ENCODE measurements at regions of chr14 and their contacts with region 1.

Region 1: DNA sequence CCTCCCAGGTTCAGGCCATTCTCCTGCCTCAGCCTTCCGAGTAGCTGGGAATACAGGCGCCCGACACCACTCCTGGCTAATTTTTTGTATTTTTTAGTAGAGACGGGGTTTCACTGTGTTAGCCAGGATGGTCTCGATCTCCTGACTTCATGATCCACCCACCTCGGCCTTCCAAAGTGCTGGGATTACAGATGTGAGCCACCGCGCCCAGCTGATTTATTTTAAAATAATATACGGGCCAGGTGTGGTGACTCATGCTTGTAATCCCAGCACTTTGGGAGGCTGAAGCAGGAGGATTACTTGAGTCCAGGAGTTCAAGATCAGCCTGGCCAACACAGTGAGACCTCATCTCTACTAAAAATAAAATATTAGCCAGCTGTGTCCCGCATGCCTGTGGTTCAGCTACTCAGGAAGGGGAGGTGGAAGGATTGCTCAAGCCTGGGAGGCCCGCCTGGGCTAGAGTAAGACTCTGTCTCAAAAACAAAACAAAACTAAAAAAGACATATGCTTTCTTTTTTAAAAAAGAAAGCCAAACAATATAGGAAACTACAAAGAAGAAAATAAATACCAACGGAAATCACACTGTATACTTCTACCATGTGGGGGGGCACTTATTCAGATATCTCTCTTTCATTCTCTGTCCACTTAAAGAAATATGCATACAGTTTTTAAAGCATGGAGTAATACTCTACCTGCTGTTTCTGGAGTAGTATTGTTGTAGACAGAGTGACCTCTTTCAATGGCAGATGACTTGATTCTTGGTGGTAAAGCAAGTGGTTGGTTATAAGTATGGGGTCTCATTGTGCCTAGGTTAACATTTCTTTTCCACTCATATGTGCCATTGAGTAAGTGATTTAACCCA is 930 bp upstream of the MIA2 start:
- DNase-seq: peak in 1 of 2 experiments; percentile 38
- H3K4me3 ChIP-seq: no peak overlapping the region
- H3K4me3 Mint-ChIP-seq: no peak overlapping the region
- H3K27ac Mint-ChIP-seq: peak overlapping the region; percentile 64
- H3K4me1 ChIP-seq: peaks cover 38% of the 10 kb centered on the region
- H3K4me1 Mint-ChIP-seq: peaks cover 5% of the 10 kb centered on the region
- H3K27me3 ChIP-seq: no peaks in the 10 kb centered on the region
- H3K27me3 Mint-ChIP-seq: no peaks in the 10 kb centered on the region
- CTCF ChIP-seq: no peak

Region 2: GRCh38 chr14:39174560-39175444 is 58.0 kb before region 1 on chr14 and contains the start of gene PNN:
- CTCF ChIA-PET with region 1: interaction called, 3 read pairs
- POLR2A ChIA-PET with region 1: interaction called, 4 read pairs
- intact Hi-C with region 1: loop called (anchors 1 kb)
- DNase-seq: peak; percentile 98 to 99
- H3K4me3 ChIP-seq: peak within 1 kb of the TSS; percentile 58
- H3K4me3 Mint-ChIP-seq: peak within 1 kb of the TSS; percentile 92
- H3K27ac Mint-ChIP-seq: peak within 1 kb of the TSS; percentile 98
- H3K4me1 ChIP-seq: 0 out of 2 replicates have a peak, but pooled peaks cover 8% of the 10 kb centered on the region
- H3K4me1 Mint-ChIP-seq: peaks cover 7% of the 10 kb centered on the region
- H3K27me3 ChIP-seq: no peaks in the 10 kb centered on the region
- H3K27me3 Mint-ChIP-seq: no peaks in the 10 kb centered on the region
- CTCF ChIP-seq: no peak
- total RNA-seq, gene PNN: 98.5 and 100 TPM in 2 replicates

Region 3: GRCh38 chr14:39243822-39244221 is 11.0 kb after region 1 on chr14:
- CTCF ChIA-PET with region 1: interaction called, 7 read pairs
- POLR2A ChIA-PET with region 1: no interaction called
- intact Hi-C with region 1: loop called (anchors 1 kb)
- DNase-seq: peak in 1 of 2 experiments; percentile 43
- H3K4me3 ChIP-seq: no peak overlapping the region
- H3K4me3 Mint-ChIP-seq: no peak overlapping the region
- H3K27ac Mint-ChIP-seq: no peak overlapping the region
- H3K4me1 ChIP-seq: peaks cover 10% of the 10 kb centered on the region; the same call in 1 of the 2 replicates
- H3K4me1 Mint-ChIP-seq: peaks cover 7% of the 10 kb centered on the region
- H3K27me3 ChIP-seq: no peaks in the 10 kb centered on the region
- H3K27me3 Mint-ChIP-seq: no peaks in the 10 kb centered on the region
- CTCF ChIP-seq: no peak

Region 4: DNA sequence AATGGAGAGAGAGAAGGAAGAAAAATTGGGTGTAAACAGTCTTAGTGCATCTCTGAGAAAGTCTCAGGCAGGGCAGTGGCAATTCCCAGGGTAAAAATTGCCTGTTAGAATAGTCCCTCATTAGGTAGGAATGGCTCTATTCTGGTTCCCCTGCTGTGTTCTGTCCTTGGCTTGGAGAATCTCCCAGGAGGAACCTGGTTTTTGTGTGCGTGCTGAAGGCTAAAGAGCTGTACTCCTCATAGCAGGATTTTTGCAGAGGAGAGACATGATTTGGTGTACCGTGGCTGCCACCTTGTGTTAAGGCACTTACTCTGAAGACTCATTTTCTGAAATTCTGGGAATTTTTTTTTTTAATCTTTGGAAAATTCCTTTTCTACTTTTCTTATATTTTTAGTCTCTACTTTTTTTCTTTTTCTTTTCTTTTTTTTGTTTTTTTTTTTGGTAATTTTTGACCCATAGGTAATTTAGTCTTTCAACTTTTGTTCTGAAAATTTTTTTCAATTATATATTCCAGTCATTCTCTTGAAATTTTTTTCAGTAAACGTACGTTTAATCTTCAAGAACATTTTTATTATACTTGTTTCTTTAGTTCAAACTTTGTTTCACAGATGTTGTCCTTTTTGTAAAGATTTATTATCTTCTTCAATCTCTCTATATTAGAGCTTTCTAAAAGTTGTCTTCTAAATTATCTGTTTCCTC is 135.6 kb after region 1 on chr14:
- CTCF ChIA-PET with region 1: interaction called, 10 read pairs
- POLR2A ChIA-PET with region 1: no interaction called
- intact Hi-C with region 1: loop called (anchors 1 kb)
- DNase-seq: peak; percentile 69 to 80
- H3K4me3 ChIP-seq: no peak overlapping the region
- H3K4me3 Mint-ChIP-seq: no peak overlapping the region
- H3K27ac Mint-ChIP-seq: no peak overlapping the region
- H3K4me1 ChIP-seq: no peaks in the 10 kb centered on the region
- H3K4me1 Mint-ChIP-seq: peaks cover 11% of the 10 kb centered on the region
- H3K27me3 ChIP-seq: no peaks in the 10 kb centered on the region
- H3K27me3 Mint-ChIP-seq: no peaks in the 10 kb centered on the region
- CTCF ChIP-seq: peak; percentile 69 to 71

Region 5: GRCh38 chr14:39383026-39383660 is 150.4 kb after region 1 on chr14:
- CTCF ChIA-PET with region 1: no interaction called
- POLR2A ChIA-PET with region 1: no interaction called
- intact Hi-C with region 1: no loop called
- DNase-seq: no peak
- H3K4me3 ChIP-seq: no peak overlapping the region
- H3K4me3 Mint-ChIP-seq: no peak overlapping the region
- H3K27ac Mint-ChIP-seq: no peak overlapping the region
- H3K4me1 ChIP-seq: no peaks in the 10 kb centered on the region
- H3K4me1 Mint-ChIP-seq: no peaks in the 10 kb centered on the region
- H3K27me3 ChIP-seq: no peaks in the 10 kb centered on the region
- H3K27me3 Mint-ChIP-seq: no peaks in the 10 kb centered on the region
- CTCF ChIP-seq: no peak

Region 6: DNA sequence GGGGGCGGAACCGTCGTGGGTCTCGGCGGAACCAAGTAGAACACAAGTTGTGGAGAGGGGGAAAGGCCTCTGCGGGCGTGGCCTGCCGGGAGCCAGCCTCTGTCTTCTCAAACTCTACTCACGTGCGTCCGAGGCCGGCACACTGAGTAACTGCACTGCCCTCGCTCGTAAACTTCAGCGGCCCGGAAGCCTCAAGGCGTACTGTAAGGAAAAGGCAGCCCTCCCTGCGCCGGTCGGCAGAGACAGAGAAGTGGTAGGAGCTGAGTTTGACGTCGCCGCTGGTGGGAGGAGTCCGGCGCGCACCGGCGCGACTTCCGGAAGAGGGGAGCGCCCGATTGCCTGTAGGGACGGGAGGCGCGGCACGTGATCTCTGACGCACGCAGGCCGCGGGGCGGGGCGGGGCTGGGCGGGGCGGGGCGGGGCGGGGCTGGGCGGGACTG is 199.4 kb after region 1 on chr14 and contains the start of gene FBXO33:
- CTCF ChIA-PET with region 1: interaction called, 11 read pairs
- POLR2A ChIA-PET with region 1: interaction called, 4 read pairs
- intact Hi-C with region 1: no loop called
- DNase-seq: peak; percentile 96 to 97
- H3K4me3 ChIP-seq: peak within 1 kb of the TSS; percentile 93
- H3K4me3 Mint-ChIP-seq: peak within 1 kb of the TSS; percentile 93
- H3K27ac Mint-ChIP-seq: peak within 1 kb of the TSS; percentile 100
- H3K4me1 ChIP-seq: peaks cover 12% of the 10 kb centered on the region
- H3K4me1 Mint-ChIP-seq: peaks cover 19% of the 10 kb centered on the region
- H3K27me3 ChIP-seq: no peaks in the 10 kb centered on the region
- H3K27me3 Mint-ChIP-seq: no peaks in the 10 kb centered on the region
- CTCF ChIP-seq: no peak
- total RNA-seq, gene FBXO33: 6.0 and 6.5 TPM in 2 replicates

Region 7: GRCh38 chr14:40113671-40114070 is 880.9 kb after region 1 on chr14:
- CTCF ChIA-PET with region 1: no interaction called
- POLR2A ChIA-PET with region 1: no interaction called
- intact Hi-C with region 1: no loop called
- DNase-seq: no peak
- H3K4me3 ChIP-seq: no peak overlapping the region
- H3K4me3 Mint-ChIP-seq: no peak overlapping the region
- H3K27ac Mint-ChIP-seq: no peak overlapping the region
- H3K4me1 ChIP-seq: no peaks in the 10 kb centered on the region; the same call in 1 of the 2 replicates
- H3K4me1 Mint-ChIP-seq: peaks cover 10% of the 10 kb centered on the region
- H3K27me3 ChIP-seq: no peaks in the 10 kb centered on the region
- H3K27me3 Mint-ChIP-seq: no peaks in the 10 kb centered on the region
- CTCF ChIP-seq: no peak

Measured in Caco-2 (cell line).